SK-N-SH (cell line): ENCODE measurements at regions of chr3 and their contacts with region 1.

Region 1: DNA sequence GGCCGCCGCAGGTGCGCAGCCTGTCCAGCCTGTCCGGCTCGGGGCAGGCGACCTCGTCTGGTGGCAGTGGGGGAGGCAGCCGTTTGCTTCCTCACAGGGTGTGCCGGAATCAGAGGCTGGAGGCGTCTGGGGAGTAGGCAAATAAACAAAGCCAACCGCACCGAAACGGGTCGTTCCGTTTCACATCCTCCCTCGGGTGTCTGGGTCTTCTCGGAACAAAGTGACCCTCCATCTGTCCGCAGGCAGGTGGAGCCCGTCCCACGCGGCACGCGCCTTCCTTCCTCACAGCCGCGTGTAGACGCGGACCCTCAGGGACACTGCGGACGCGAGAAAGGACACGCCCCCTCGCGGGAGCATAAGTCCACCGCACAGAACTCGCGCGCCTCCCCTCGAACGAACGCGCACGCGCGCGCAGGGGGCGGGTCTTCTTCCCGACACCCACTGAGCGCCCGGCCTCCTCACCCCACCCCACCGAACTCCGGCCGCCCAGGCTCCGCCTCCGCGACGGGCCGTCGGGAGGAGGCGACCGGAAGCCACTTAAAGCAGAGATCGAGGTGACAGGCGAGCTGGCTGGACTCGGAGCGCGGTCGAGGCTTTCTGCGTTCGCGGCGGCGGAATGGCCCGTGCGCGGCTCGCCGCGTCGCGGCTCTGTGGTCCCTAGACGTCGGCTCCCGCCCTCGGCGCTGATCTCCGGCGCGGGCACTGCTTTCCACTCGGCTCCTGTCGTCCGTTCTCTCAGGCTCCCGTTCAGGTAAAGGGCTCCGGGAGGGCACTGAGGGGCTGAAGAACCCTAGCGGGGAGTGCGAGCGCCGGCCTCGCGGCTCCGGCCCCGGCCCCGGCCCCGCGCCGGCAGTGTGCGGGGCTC is at the start of gene TIPARP:
- DNase-seq: peak; percentile 99
- H3K4me3 ChIP-seq: peak within 1 kb of the TSS; percentile 89 to 91
- H3K27ac ChIP-seq: peak within 1 kb of the TSS; percentile 86 to 92
- H3K4me1 ChIP-seq: peaks cover 0 to 7% of the 10 kb centered on the region in 2 experiments; a peak in 2 of 4 replicates
- H3K27me3 ChIP-seq: no peaks in the 10 kb centered on the region
- CTCF ChIP-seq: peak; percentile 67
- EP300 ChIP-seq: peak; percentile 26 to 31; a peak in 1 of 4 replicates
- RAD21 ChIP-seq: peak; percentile 64
- polyA plus RNA-seq, gene TIPARP: 6.2 TPM in 2 replicates

Region 2: GRCh38 chr3:156685198-156685597 is 10.9 kb after region 1 on chr3:
- CTCF ChIA-PET with region 1: interaction called, 13 read pairs
- POLR2A ChIA-PET with region 1: no interaction called
- DNase-seq: no peak
- H3K4me3 ChIP-seq: no peak overlapping the region
- H3K27ac ChIP-seq: peak overlapping the region in 1 of 2 experiments; percentile 2; a peak in 1 of 4 replicates
- H3K4me1 ChIP-seq: peaks cover 15 to 74% of the 10 kb centered on the region in 2 experiments; a peak in 3 of 4 replicates
- H3K27me3 ChIP-seq: no peaks in the 10 kb centered on the region
- CTCF ChIP-seq: no peak
- EP300 ChIP-seq: no peak
- RAD21 ChIP-seq: no peak

Region 3: GRCh38 chr3:157073810-157074209 is 399.5 kb after region 1 on chr3:
- CTCF ChIA-PET with region 1: interaction called, 12 read pairs
- POLR2A ChIA-PET with region 1: no interaction called
- DNase-seq: peak; percentile 42
- H3K4me3 ChIP-seq: no peak overlapping the region
- H3K27ac ChIP-seq: no peak overlapping the region
- H3K4me1 ChIP-seq: peaks cover 16 to 21% of the 10 kb centered on the region in 2 experiments; a peak in 2 of 4 replicates
- H3K27me3 ChIP-seq: no peaks in the 10 kb centered on the region
- CTCF ChIP-seq: no peak
- EP300 ChIP-seq: no peak
- RAD21 ChIP-seq: peak; percentile 58

Region 4: GRCh38 chr3:157088601-157089454 is 414.6 kb after region 1 on chr3:
- CTCF ChIA-PET with region 1: interaction called, 75 read pairs
- POLR2A ChIA-PET with region 1: interaction called, 13 read pairs
- DNase-seq: peak; percentile 99
- H3K4me3 ChIP-seq: peak overlapping the region; percentile 67 to 71
- H3K27ac ChIP-seq: peak overlapping the region; percentile 95 to 99
- H3K4me1 ChIP-seq: peaks cover 15 to 31% of the 10 kb centered on the region in 2 experiments
- H3K27me3 ChIP-seq: no peaks in the 10 kb centered on the region
- CTCF ChIP-seq: no peak; the same call in none of the 2 replicates
- EP300 ChIP-seq: peak in 1 of 2 experiments; percentile 30; a peak in 1 of 4 replicates
- RAD21 ChIP-seq: no peak

Region 5: DNA sequence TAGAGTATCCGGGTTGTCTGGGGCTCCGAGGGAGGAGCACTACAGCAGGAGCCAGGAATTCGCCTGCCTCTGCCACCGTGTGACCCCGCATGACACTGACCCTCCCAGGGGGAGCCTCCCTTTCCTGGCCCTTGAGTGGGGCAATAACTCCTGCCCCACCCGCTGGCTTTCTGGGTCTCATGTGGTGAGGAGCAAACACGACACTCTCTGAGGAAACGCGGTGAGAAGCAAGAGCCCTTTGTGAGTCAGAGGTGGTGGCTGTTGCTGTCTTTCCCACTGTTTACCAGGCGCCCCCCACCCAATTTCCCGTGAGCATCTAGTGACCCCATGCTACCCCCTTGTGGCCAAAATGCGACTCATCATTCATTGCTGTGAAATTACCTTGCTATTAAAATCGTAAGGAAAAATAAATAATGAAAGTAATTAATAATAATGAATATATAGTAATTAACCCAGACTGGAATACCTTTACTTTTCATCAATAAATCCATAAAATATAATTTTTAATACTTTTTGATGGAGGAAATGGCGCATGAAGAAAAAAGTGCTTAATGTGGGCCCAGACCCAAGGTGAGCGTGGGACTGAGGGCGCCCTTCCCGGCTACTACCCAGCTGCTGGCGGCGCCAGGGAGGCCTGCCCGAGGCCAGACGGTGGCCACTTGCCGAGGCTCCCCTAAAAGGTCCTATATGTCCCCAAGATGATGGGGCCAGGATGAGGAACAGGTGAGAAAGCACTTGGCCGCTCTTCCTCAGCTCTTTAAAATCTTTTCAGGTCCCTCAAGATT is 456.4 kb after region 1 on chr3:
- CTCF ChIA-PET with region 1: interaction called, 41 read pairs
- POLR2A ChIA-PET with region 1: no interaction called
- DNase-seq: peak; percentile 77
- H3K4me3 ChIP-seq: no peak overlapping the region
- H3K27ac ChIP-seq: peak overlapping the region in 1 of 2 experiments; percentile 80; a peak in 1 of 4 replicates
- H3K4me1 ChIP-seq: peaks cover 12 to 68% of the 10 kb centered on the region in 2 experiments; a peak in 3 of 4 replicates
- H3K27me3 ChIP-seq: no peaks in the 10 kb centered on the region
- CTCF ChIP-seq: peak; percentile 68
- EP300 ChIP-seq: no peak
- RAD21 ChIP-seq: peak; percentile 79